Psoas muscle (tissue), 8 donors: ENCODE measurements at regions of chr1 and their contacts with region 1.

Region 1: GRCh38 chr1:151124763-151125403 is 21.5 kb downstream of the SEMA6C start:
- DNase-seq: no peak
- ATAC-seq: no peak
- H3K4me3 ChIP-seq: no peak overlapping the region
- H3K27ac ChIP-seq: no peak overlapping the region
- H3K4me1 ChIP-seq: no peaks in the 10 kb centered on the region
- H3K27me3 ChIP-seq: no peaks in the 10 kb centered on the region
- CTCF ChIP-seq: no peak

Region 2: GRCh38 chr1:151070474-151071276 is 54.2 kb before region 1 on chr1 and contains the start of gene GABPB2:
- intact Hi-C with region 1: loop called in 1 of 2 experiments (anchors 5 kb)
- DNase-seq: peak; percentile 93 to 96
- ATAC-seq: peak; percentile 91 to 94 (median 92)
- H3K4me3 ChIP-seq: peak within 1 kb of the TSS; percentile 75
- H3K27ac ChIP-seq: peak within 1 kb of the TSS; percentile 99
- H3K4me1 ChIP-seq: peaks cover 18% of the 10 kb centered on the region
- H3K27me3 ChIP-seq: no peaks in the 10 kb centered on the region
- CTCF ChIP-seq: peak; percentile 92
- total RNA-seq, gene GABPB2: 8.2 to 15.9 (median 9.7) TPM